A549 (cell line): ENCODE measurements at regions of chr7 and their contacts with region 1.

Region 1: DNA sequence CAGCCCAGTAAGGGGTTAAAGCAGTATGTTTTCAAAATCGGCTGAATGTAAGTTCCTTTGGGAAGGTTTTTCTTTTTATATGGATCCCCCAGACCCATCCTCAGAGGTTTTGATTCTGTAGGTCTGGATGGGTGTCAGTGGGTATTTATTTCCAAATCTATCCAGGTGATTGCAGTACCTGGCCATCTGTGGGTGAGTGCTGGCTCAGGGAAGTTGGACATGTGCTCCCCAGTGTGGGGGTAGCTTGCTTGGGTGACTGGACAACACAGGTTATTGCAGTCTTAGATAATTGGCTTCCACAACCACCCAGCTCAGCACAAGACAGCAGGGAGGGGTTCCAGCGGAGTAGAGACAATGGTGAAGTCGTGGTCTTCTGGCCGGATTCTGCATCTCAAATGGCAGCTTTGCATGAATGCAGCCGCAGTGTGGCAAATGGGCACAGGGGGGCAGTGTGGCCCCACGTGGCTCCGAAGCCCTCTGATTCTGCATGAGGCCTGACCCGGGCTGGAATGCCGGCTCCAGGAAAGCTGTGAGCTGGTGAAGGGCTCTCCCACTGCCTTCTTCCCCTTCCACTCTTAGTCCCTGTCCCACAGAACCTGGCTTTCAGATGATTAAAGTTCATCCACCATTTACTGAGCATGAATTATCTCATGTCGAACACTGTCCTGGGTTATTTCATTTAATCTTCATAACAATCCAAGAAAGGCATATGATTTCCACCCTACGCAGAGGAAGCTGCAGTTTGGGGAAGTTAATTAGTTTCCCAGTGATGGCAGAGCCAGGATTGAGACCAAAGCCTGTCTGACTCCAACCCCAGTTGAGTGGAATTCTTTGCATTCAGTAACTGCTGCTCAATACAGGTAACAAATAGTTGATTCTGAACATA is 64.5 kb upstream of the SYPL1 start:
- DNase-seq: peak; percentile 75 to 85
- ATAC-seq: peak; percentile 94
- H3K4me3 ChIP-seq: no peak overlapping the region
- H3K27ac ChIP-seq: peak overlapping the region; percentile 26 to 53; a peak in 5 of 6 replicates
- H3K4me1 ChIP-seq: peaks cover 19% of the 10 kb centered on the region
- CTCF ChIP-seq: peak; percentile 96
- EP300 ChIP-seq: no peak
- POLR2A ChIP-seq: no peak
- RAD21 ChIP-seq: peak; percentile 98 to 99

Region 2: DNA sequence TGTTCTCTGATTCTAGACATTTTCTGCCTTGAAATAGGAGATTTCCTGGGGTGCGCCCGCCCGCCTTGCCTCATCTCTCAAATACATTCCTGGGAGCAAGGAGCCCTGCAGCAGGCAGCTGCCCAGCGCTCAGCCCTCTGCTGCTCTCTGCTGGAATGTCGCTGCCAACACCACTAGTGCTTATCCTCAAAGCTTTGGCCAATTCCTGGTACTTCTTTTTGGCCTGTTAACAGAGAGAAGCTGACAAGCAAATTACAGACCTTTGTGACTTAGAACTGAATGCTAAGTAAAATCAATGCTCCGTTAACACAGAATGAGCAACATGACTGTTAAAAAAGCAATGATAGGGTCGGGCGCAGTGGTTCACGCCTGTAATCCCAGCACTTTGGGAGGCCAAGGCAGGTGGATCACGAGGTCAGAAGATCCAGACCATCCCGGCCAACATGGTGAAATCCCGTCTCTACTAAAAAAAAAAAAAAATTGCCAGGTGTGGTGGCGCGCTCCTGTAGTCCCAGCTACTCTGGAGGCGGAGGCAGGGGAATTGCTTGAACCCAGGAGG is 22.7 kb before region 1 on chr7:
- CTCF ChIA-PET with region 1: interaction called, 94 read pairs
- POLR2A ChIA-PET with region 1: no interaction called
- DNase-seq: peak; percentile 75 to 84
- ATAC-seq: peak; percentile 97 to 99
- H3K4me3 ChIP-seq: no peak overlapping the region
- H3K27ac ChIP-seq: no peak overlapping the region
- H3K4me1 ChIP-seq: peaks cover 20% of the 10 kb centered on the region; the same call in 2 of the 3 replicates
- CTCF ChIP-seq: peak; percentile 87
- EP300 ChIP-seq: no peak
- POLR2A ChIP-seq: no peak
- RAD21 ChIP-seq: peak; percentile 98 to 99

Region 3: GRCh38 chr7:106193661-106194060 is 17.0 kb after region 1 on chr7:
- CTCF ChIA-PET with region 1: interaction called, 19 read pairs
- POLR2A ChIA-PET with region 1: no interaction called
- DNase-seq: no peak
- ATAC-seq: no peak
- H3K4me3 ChIP-seq: no peak overlapping the region
- H3K27ac ChIP-seq: no peak overlapping the region
- H3K4me1 ChIP-seq: peaks cover 7% of the 10 kb centered on the region; the same call in 2 of the 3 replicates
- CTCF ChIP-seq: no peak
- EP300 ChIP-seq: no peak
- POLR2A ChIP-seq: no peak
- RAD21 ChIP-seq: no peak

Region 4: GRCh38 chr7:106216517-106216922 is 39.9 kb after region 1 on chr7:
- CTCF ChIA-PET with region 1: interaction called, 14 read pairs
- POLR2A ChIA-PET with region 1: no interaction called
- DNase-seq: peak; percentile 75 to 88
- ATAC-seq: peak; percentile 94 to 95
- H3K4me3 ChIP-seq: peak overlapping the region; percentile 24; the same call in 2 of the 3 replicates
- H3K27ac ChIP-seq: peak overlapping the region; percentile 80 to 87
- H3K4me1 ChIP-seq: peaks cover 22% of the 10 kb centered on the region
- CTCF ChIP-seq: no peak
- EP300 ChIP-seq: no peak
- POLR2A ChIP-seq: no peak
- RAD21 ChIP-seq: peak in 1 of 2 experiments; percentile 4; a peak in 1 of 5 replicates

Region 5: DNA sequence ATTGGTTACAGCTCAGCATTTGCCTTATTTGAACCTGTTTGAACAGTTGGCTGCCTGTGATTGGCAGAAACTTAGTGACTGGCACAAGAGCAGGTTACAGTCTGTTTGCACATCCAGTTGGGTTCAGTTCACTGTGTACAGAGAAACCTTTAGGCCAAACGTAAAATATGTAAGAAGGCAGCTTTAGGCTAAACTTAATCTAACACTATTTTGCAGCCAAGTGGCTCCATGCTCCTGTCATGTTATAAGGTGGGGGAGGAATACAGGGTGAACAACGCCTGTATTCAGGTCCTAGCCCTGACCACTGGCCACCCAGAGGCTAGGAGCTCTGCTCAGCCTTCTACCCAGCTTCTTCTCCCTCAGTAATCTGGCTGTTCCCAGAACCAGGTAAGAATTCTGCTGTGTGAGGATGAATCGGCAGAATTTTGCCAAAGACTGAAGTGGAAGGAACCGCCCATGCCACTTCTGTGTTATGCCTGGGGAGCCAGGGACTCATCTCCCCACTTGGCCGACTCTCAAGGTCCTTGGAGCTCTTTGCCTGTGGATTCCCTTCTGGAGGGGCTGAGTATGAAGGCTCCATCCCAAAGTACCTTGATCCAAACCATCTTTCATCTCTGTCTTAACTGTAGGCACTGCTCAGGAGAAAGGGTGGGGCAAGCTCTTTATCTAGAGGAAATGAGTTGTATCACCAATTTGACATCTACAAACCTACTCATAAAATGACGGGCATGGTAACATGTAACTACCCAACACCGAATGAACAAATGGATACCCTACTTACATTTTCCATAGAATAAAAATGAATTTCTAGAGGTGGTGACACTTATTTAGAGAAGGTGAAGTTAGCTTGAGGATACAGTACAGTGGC is 272.6 kb after region 1 on chr7:
- CTCF ChIA-PET with region 1: interaction called, 16 read pairs
- POLR2A ChIA-PET with region 1: no interaction called
- DNase-seq: peak in 1 of 2 experiments; percentile 91
- ATAC-seq: peak; percentile 80 to 93
- H3K4me3 ChIP-seq: no peak overlapping the region
- H3K27ac ChIP-seq: peak overlapping the region; percentile 85 to 90
- H3K4me1 ChIP-seq: peaks cover 30% of the 10 kb centered on the region
- CTCF ChIP-seq: no peak
- EP300 ChIP-seq: peak in 1 of 2 experiments; percentile 15; a peak in 1 of 5 replicates
- POLR2A ChIP-seq: no peak
- RAD21 ChIP-seq: no peak

Region 6: DNA sequence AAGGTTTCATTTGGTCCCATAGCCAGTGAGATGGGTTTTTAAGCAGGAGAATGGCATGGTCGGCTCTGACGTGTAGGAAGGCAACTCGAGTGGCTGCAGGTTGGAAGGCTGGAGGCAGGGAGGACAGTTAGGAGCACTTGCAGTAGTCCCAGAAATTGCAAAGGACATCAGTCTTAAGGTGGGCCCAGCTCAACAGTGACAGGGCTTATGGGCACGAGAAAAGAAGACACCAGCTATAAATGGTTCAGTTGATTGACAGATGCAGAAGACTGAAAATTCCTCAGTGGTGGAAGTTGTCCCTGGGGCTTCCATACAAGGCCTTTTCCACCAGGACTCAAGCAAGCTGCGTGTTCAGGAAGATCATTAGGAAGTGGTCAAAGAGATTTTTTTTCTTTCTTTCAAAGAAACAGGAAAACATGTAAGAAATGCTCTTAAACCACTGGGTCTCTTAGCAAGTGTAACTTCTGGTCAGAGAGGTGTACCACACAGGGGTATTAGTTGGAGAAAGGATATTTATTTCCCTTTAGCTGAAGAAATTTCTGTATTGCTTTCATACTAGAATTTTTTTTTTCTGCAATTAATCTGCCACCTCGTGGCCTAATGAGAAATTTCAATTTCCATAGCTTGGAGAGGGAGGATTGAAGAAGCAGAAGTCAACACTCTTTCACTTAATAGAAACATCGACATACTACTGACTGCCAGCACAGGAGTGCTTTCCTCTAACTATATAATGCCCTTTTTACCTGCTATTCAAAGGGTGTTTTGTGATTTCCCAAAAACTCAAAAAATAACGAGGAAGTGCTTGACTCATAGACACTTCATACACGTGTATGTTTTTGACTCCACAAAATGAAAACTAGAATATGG is 285.6 kb after region 1 on chr7:
- CTCF ChIA-PET with region 1: interaction called, 289 read pairs
- POLR2A ChIA-PET with region 1: interaction called, 10 read pairs
- DNase-seq: peak in 1 of 2 experiments; percentile 50
- ATAC-seq: peak; percentile 62 to 81
- H3K4me3 ChIP-seq: no peak overlapping the region
- H3K27ac ChIP-seq: peak overlapping the region; percentile 62 to 67
- H3K4me1 ChIP-seq: peaks cover 12% of the 10 kb centered on the region; the same call in 1 of the 3 replicates
- CTCF ChIP-seq: peak; percentile 80
- EP300 ChIP-seq: no peak
- POLR2A ChIP-seq: no peak
- RAD21 ChIP-seq: peak; percentile 78 to 89

Region 7: GRCh38 chr7:106659963-106660861 is 483.6 kb after region 1 on chr7:
- CTCF ChIA-PET with region 1: interaction called, 26 read pairs
- POLR2A ChIA-PET with region 1: no interaction called
- DNase-seq: peak; percentile 87 to 92
- ATAC-seq: peak; percentile 86 to 87
- H3K4me3 ChIP-seq: peak overlapping the region; percentile 88
- H3K27ac ChIP-seq: peak overlapping the region; percentile 90 to 94
- H3K4me1 ChIP-seq: peaks cover 9% of the 10 kb centered on the region; the same call in 2 of the 3 replicates
- CTCF ChIP-seq: peak; percentile 99
- EP300 ChIP-seq: no peak
- POLR2A ChIP-seq: no peak; the same call in 1 of the 2 replicates
- RAD21 ChIP-seq: peak; percentile 58 to 87